ENCODE measurements at regions of chr1 and their contacts with region 1.

Region 1: DNA sequence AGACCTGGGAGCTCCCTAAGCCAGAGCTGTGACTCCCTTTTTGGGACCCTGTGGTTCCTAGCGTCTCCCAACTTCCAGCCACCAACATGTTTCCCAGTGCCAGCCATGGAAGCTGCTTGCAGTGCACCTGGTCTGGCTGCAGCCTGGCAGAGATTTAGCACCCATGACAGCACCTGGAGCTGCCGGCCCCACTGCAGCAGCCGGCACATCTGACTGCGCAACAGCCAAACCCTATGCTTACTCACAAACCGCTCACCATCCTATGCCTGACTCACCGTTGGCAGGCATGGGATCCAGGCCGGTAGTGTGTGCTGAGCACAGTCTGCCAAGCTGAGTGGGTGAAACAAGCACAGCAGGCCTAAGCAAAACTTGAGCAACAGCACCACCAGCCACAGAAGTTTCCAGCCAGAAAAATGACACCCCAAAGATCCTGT is 435.9 kb upstream of the PRMT6 start:
- DNase-seq: peak; percentile 96
- H3K4me3 ChIP-seq: no peak overlapping the region
- H3K27ac ChIP-seq: no peak overlapping the region
- H3K4me1 ChIP-seq: peaks cover 19% of the 10 kb centered on the region
- H3K27me3 ChIP-seq: no peaks in the 10 kb centered on the region
- CTCF ChIP-seq: peak in 1 of 2 donors; percentile 46

Region 2: GRCh38 chr1:106022312-106022902 is 598.1 kb before region 1 on chr1:
- CTCF ChIA-PET with region 1: no interaction called
- dilution Hi-C with region 1: no loop called
- in situ Hi-C with region 1: no loop called
- intact Hi-C with region 1: loop called (anchors 2 kb)
- DNase-seq: no peak
- H3K4me3 ChIP-seq: no peak overlapping the region
- H3K27ac ChIP-seq: no peak overlapping the region
- H3K4me1 ChIP-seq: no peaks in the 10 kb centered on the region
- H3K27me3 ChIP-seq: no peaks in the 10 kb centered on the region
- CTCF ChIP-seq: peak; percentile 28 to 38

Region 3: GRCh38 chr1:106584107-106584506 is 36.4 kb before region 1 on chr1:
- CTCF ChIA-PET with region 1: no interaction called
- dilution Hi-C with region 1: no loop called
- in situ Hi-C with region 1: no loop called
- intact Hi-C with region 1: no loop called
- DNase-seq: no peak
- H3K4me3 ChIP-seq: no peak overlapping the region
- H3K27ac ChIP-seq: no peak overlapping the region
- H3K4me1 ChIP-seq: no peaks in the 10 kb centered on the region
- H3K27me3 ChIP-seq: no peaks in the 10 kb centered on the region
- CTCF ChIP-seq: no peak

Region 4: DNA sequence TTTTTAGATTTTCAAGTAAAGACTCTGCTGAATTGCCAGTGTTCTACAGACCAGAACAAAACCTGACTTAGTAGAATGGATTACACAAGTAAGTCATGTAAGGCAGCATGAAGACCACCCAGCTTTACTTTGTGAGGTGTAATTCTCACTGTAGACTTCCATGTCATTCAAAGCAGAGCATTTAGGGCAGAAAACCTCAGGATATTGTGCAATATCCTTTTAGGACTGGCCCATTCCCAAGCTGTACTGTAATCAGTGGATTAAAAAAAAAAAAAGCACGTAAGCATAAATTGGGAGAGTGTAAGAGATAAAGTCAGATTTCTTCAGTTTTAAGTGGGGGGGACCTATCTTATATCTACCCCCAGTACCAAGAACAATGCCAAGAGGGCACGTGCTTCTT is 55.5 kb after region 1 on chr1:
- CTCF ChIA-PET with region 1: no interaction called
- dilution Hi-C with region 1: no loop called
- in situ Hi-C with region 1: no loop called
- intact Hi-C with region 1: no loop called
- DNase-seq: peak; percentile 14
- H3K4me3 ChIP-seq: no peak overlapping the region
- H3K27ac ChIP-seq: no peak overlapping the region
- H3K4me1 ChIP-seq: peaks cover 3% of the 10 kb centered on the region
- H3K27me3 ChIP-seq: no peaks in the 10 kb centered on the region
- CTCF ChIP-seq: no peak

Region 5: DNA sequence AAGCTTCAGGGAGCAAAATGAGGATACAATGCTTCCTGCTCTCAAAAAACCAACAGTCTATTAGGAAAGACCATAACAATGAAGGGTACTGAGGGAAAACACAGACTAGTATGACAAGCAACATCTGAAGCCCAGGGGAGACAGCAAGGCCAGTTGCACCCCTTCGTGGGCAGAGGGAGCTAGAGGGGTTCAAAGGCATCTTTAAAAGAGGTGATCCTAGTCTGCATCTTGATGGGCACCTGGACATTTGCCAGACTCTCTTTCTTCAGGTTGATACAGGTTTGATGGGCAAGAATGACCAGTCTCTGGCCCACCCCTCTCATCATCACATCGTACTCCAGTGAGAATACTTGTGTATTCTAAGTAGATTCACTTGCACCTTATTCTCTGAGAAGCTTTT is 1166.8 kb after region 1 on chr1:
- CTCF ChIA-PET with region 1: no interaction called
- dilution Hi-C with region 1: no loop called
- in situ Hi-C with region 1: no loop called
- intact Hi-C with region 1: no loop called
- DNase-seq: no peak
- H3K4me3 ChIP-seq: no peak overlapping the region
- H3K27ac ChIP-seq: no peak overlapping the region
- H3K4me1 ChIP-seq: no peaks in the 10 kb centered on the region
- H3K27me3 ChIP-seq: no peaks in the 10 kb centered on the region
- CTCF ChIP-seq: peak; percentile 30 to 34